HepG2 (cell line): ENCODE measurements at regions of chrX and their contacts with region 1.

Region 1: GRCh38 chrX:70454441-70455365 is 10.1 kb downstream of the DLG3 start:
- DNase-seq: peak; percentile 84
- ATAC-seq: peak; percentile 91
- H3K4me3 ChIP-seq: peak overlapping the region; percentile 67 to 84 (median 78)
- H3K27ac ChIP-seq: peak overlapping the region; percentile 69
- H3K4me1 ChIP-seq: peaks cover 24% of the 10 kb centered on the region
- H3K27me3 ChIP-seq: no peaks in the 10 kb centered on the region; a peak in 2 of 5 replicates
- CTCF ChIP-seq: peak; percentile 87
- EP300 ChIP-seq: no peak
- POLR2A ChIP-seq: no peak; a peak in 1 of 4 replicates
- RAD21 ChIP-seq: peak; percentile 69

Region 2: DNA sequence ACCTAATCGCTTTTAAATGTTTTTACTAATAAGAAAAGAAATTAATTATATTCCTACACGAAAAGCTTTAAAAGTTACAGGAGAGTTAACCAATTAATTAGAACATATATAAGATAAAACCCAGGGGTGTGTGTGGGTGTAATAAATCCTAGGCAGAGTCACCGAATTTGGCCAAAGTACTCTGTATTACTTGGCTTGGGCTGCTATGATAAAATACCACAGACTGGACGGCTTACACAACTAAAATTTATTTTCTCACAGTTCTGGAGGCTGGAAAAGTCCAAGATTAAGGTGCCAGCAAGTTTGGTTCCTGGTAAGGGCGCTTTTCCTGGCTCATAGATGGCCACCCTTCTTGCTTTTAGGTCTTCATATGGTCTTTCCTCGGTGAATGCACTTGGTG is 209.8 kb before region 1 on chrX:
- CTCF ChIA-PET with region 1: no interaction called
- POLR2A ChIA-PET with region 1: no interaction called
- in situ Hi-C with region 1: no loop called
- intact Hi-C with region 1: no loop called
- DNase-seq: no peak
- ATAC-seq: no peak
- H3K4me3 ChIP-seq: no peak overlapping the region
- H3K27ac ChIP-seq: no peak overlapping the region
- H3K4me1 ChIP-seq: no peaks in the 10 kb centered on the region
- H3K27me3 ChIP-seq: no peaks in the 10 kb centered on the region
- CTCF ChIP-seq: no peak
- EP300 ChIP-seq: no peak
- POLR2A ChIP-seq: no peak
- RAD21 ChIP-seq: no peak

Region 3: DNA sequence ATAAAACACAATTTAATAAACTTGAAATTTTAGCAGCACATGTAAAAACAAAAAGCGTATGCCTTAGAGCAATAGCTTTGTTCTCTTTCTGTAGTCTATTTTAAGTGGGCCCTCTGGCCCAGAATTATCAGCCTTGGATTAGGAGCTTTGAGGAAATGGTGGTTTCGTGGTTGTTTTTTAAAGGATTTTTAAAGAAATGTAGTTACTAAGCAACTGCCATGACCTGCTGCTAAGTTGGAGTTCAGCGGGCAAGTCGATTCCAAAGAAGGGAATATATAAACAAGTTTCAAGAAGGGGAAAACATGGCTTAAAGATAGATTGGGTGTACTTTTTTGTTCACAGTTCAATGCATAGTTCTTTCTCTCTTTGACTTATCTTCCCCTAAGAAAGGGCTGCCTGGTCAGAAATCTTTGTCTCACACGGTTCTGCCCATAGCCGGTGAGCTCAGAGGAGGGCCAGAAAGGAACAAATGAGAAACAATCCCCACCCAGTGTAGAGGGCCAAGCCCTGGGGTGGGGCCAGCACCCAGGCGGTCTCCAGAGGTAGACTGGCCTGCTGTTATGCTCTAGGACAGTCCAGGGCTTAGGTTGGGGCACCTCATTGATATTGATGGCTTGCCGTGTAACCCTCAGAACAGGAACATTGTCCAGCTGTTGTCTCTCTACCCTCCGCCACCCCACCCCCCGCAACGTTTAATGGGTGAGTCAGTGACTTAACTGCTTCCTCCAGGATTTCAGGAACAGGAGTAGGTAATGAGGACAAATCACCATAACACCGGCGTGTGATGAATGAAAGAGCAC is 22.4 kb after region 1 on chrX:
- CTCF ChIA-PET with region 1: no interaction called
- POLR2A ChIA-PET with region 1: no interaction called
- in situ Hi-C with region 1: no loop called
- intact Hi-C with region 1: loop called (anchors 2 kb)
- DNase-seq: no peak
- ATAC-seq: peak; percentile 88
- H3K4me3 ChIP-seq: peak overlapping the region in 2 of 3 experiments; percentile 22 to 37; a peak in 3 of 6 replicates
- H3K27ac ChIP-seq: peak overlapping the region; percentile 35
- H3K4me1 ChIP-seq: peaks cover 35% of the 10 kb centered on the region
- H3K27me3 ChIP-seq: no peaks in the 10 kb centered on the region
- CTCF ChIP-seq: no peak
- EP300 ChIP-seq: no peak
- POLR2A ChIP-seq: no peak
- RAD21 ChIP-seq: no peak

Region 4: DNA sequence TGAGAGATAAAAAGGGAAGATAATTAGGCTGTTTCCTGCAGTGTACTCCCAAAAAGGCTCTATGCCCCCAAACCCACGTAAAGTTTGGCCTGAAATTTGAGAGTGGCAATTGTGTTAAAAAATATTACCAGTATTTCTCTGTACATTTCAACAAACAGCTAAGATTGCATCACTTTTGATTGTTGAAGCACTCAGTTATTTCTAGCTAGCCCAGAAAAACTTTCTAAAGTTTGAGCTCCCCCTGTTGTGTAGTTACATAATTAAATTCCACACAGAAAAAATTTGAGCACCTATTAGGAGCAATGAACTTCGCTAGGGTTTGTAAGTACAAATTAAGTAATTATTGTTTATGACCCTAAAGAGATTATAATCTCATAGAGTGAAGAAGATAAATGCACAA is 99.4 kb after region 1 on chrX:
- CTCF ChIA-PET with region 1: interaction called, 5 read pairs
- POLR2A ChIA-PET with region 1: no interaction called
- in situ Hi-C with region 1: loop called (anchors 5 kb)
- intact Hi-C with region 1: loop called (anchors 2 kb)
- DNase-seq: peak; percentile 16
- ATAC-seq: no peak
- H3K4me3 ChIP-seq: no peak overlapping the region
- H3K27ac ChIP-seq: no peak overlapping the region
- H3K4me1 ChIP-seq: peaks cover 8% of the 10 kb centered on the region; the same call in 1 of the 2 replicates
- H3K27me3 ChIP-seq: no peaks in the 10 kb centered on the region
- CTCF ChIP-seq: peak; percentile 15; the same call in 1 of the 2 replicates
- EP300 ChIP-seq: no peak
- POLR2A ChIP-seq: no peak
- RAD21 ChIP-seq: no peak

Region 5: DNA sequence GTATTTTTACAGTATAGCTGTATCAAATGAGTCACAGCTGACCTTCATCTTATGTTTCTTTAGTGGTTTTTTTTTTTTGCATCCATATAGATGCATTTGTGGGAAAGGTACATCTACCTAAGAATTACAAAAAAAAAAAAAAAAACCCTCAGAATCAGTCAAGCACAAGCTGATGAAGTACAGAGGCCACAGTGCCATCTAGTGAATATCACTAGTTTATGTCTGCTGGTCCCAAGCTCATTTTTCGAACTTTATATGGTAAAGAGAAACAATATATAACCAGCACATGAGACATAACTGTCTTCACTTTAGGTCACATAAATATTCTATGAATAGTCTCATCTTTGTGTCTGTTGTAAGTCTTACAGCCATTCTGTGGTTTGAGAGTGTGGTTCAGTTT is 210.0 kb after region 1 on chrX:
- CTCF ChIA-PET with region 1: interaction called, 9 read pairs
- POLR2A ChIA-PET with region 1: no interaction called
- in situ Hi-C with region 1: loop called (anchors 10 kb)
- intact Hi-C with region 1: loop called (anchors 1 kb)
- DNase-seq: peak; percentile 19
- ATAC-seq: 0 out of 3 replicates have a peak, but pooled peaks have one; percentile 43
- H3K4me3 ChIP-seq: no peak overlapping the region
- H3K27ac ChIP-seq: no peak overlapping the region
- H3K4me1 ChIP-seq: no peaks in the 10 kb centered on the region
- H3K27me3 ChIP-seq: no peaks in the 10 kb centered on the region
- CTCF ChIP-seq: peak; percentile 51
- EP300 ChIP-seq: no peak
- POLR2A ChIP-seq: no peak
- RAD21 ChIP-seq: no peak

Region 6: DNA sequence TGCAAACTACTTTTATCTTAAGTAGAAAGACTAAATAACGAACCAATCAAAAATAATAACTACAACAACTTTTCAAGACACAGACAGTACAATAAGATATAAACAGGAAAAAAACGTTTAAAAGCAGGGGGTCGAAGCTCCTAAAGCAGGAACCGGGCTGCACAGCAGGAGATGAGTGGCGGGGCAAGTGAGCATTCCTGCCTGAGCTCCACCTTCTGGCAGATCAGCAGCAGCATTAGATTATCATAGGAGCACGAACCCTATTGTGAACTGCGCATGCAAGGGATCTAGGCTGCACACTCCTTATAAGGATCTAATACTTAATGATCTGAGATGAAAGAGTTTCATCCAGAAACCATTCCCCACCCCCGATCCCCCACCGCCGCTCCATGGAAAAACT is 307.6 kb after region 1 on chrX:
- CTCF ChIA-PET with region 1: no interaction called
- POLR2A ChIA-PET with region 1: no interaction called
- in situ Hi-C with region 1: no loop called
- intact Hi-C with region 1: loop called (anchors 5 kb)
- DNase-seq: no peak
- ATAC-seq: no peak
- H3K4me3 ChIP-seq: no peak overlapping the region
- H3K27ac ChIP-seq: no peak overlapping the region
- H3K4me1 ChIP-seq: no peaks in the 10 kb centered on the region
- H3K27me3 ChIP-seq: no peaks in the 10 kb centered on the region
- CTCF ChIP-seq: peak; percentile 34; the same call in 1 of the 2 replicates
- EP300 ChIP-seq: no peak
- POLR2A ChIP-seq: no peak
- RAD21 ChIP-seq: no peak